ENCODE measurements at regions of chr1 and their contacts with region 1.

Region 1: GRCh38 chr1:145823565-145824498 is at the starts of genes POLR3C and RNF115:
- DNase-seq: peak; percentile 91

Region 2: GRCh38 chr1:145765574-145765973 is 58.3 kb before region 1 on chr1:
- CTCF ChIA-PET with region 1: no interaction called
- POLR2A ChIA-PET with region 1: no interaction called
- DNase-seq: no peak

Region 3: DNA sequence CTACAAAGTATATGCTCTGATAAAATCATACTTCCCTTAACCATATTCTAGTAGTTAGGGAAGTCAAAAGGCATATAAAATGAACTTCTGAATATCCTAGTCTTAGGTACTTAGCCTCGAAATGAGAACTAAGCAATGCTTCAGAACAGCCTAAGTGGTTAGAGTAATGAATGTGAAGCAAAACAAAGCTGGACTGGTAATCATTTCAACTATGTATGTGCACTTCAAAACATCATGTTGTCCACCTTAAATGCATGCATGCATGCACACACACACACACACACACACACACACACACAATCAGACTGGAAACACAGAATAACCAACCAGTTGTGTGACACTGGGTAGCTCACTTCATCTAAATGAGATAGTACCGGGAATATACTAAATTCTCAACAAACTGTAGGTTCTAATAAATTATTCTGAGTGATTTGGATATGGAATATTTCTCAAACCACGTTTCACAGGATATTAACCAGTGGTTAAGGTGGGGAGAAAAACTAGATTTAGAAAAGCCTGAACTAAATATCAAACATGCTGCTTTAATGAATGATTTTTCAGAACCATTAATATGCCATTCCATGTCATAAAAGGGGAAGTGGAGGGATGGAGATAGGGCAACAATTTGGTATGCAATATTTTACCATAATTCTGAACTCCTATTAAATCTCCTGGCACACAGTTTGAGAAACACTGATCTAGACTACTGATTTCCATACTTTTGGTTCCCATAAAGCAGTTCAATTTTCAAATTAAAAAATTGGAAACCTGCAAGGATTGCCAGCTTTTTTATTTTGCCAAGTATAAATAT is 19.4 kb before region 1 on chr1:
- CTCF ChIA-PET with region 1: no interaction called
- POLR2A ChIA-PET with region 1: interaction called, 11 read pairs
- DNase-seq: no peak

Measured in HEK293T (cell line).